ENCODE measurements at regions of chr12 and their contacts with region 1.

Region 1: GRCh38 chr12:95318071-95318545 is 100.5 kb downstream of the VEZT start:
- DNase-seq: peak; percentile 87
- ATAC-seq: peak; percentile 90
- H3K4me3 ChIP-seq: no peak overlapping the region
- H3K27ac ChIP-seq: no peak overlapping the region
- H3K4me1 ChIP-seq: peaks cover 9% of the 10 kb centered on the region; the same call in 1 of the 2 replicates
- H3K27me3 ChIP-seq: no peaks in the 10 kb centered on the region; the same call in 1 of the 2 replicates
- CTCF ChIP-seq: no peak

Region 2: GRCh38 chr12:95131585-95132340 is 186.3 kb before region 1 on chr12:
- CTCF ChIA-PET with region 1: no interaction called
- POLR2A ChIA-PET with region 1: interaction called, 12 read pairs
- in situ Hi-C with region 1: no loop called
- intact Hi-C with region 1: no loop called
- DNase-seq: no peak
- ATAC-seq: no peak
- H3K4me3 ChIP-seq: no peak overlapping the region
- H3K27ac ChIP-seq: no peak overlapping the region
- H3K4me1 ChIP-seq: no peaks in the 10 kb centered on the region
- H3K27me3 ChIP-seq: no peaks in the 10 kb centered on the region
- CTCF ChIP-seq: no peak

Region 3: GRCh38 chr12:95248604-95249360 is 69.3 kb before region 1 on chr12:
- CTCF ChIA-PET with region 1: no interaction called
- POLR2A ChIA-PET with region 1: no interaction called
- in situ Hi-C with region 1: no loop called
- intact Hi-C with region 1: no loop called
- DNase-seq: no peak
- ATAC-seq: no peak
- H3K4me3 ChIP-seq: no peak overlapping the region
- H3K27ac ChIP-seq: no peak overlapping the region
- H3K4me1 ChIP-seq: peaks cover 2% of the 10 kb centered on the region; the same call in 1 of the 2 replicates
- H3K27me3 ChIP-seq: no peaks in the 10 kb centered on the region
- CTCF ChIP-seq: no peak

Region 4: DNA sequence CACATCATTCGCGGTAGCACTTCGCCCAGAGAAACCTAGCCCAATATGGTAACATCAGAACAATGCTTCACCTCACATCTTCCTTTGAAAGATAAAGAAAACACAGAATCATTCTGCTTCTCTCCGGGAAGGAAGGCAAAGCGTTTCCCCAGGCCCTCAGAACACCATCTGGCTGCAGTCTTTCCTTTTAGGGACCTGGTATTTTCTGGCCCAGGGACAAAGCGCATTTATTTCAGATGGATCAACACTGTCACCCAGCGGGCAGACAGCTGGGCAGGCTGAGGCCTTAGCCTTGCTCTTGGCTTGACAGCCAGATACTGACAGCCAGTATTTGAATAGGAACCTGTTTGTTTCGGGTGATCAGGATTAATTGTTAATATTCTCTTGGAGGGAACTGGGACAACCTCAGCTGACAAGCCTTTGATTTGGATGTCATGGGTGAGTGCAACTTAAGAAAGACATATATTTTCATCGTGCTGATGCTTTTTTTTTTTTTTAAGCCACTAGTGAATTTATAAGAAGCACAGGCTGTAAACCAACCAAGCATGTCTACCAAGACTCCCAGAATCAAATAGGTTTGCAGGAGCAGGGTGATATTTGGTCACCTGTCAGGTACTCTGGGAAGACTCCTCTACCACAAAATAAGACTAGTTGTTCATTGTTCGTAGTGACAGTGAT is 18.4 kb after region 1 on chr12:
- CTCF ChIA-PET with region 1: no interaction called
- POLR2A ChIA-PET with region 1: no interaction called
- in situ Hi-C with region 1: no loop called
- intact Hi-C with region 1: no loop called
- DNase-seq: peak; percentile 42
- ATAC-seq: peak; percentile 94
- H3K4me3 ChIP-seq: no peak overlapping the region
- H3K27ac ChIP-seq: no peak overlapping the region
- H3K4me1 ChIP-seq: peaks cover 4% of the 10 kb centered on the region
- H3K27me3 ChIP-seq: no peaks in the 10 kb centered on the region
- CTCF ChIP-seq: peak; percentile 96

Region 5: GRCh38 chr12:95532851-95533250 is 214.7 kb after region 1 on chr12:
- CTCF ChIA-PET with region 1: no interaction called
- POLR2A ChIA-PET with region 1: interaction called, 10 read pairs
- in situ Hi-C with region 1: no loop called
- intact Hi-C with region 1: loop called (anchors 10 kb)
- DNase-seq: no peak
- ATAC-seq: no peak
- H3K4me3 ChIP-seq: no peak overlapping the region
- H3K27ac ChIP-seq: no peak overlapping the region
- H3K4me1 ChIP-seq: peaks cover 9% of the 10 kb centered on the region
- H3K27me3 ChIP-seq: peaks cover 3% of the 10 kb centered on the region; the same call in 1 of the 2 replicates
- CTCF ChIP-seq: no peak